AG04450 (cell line): ENCODE measurements at regions of chrX and their contacts with region 1.

Region 1: DNA sequence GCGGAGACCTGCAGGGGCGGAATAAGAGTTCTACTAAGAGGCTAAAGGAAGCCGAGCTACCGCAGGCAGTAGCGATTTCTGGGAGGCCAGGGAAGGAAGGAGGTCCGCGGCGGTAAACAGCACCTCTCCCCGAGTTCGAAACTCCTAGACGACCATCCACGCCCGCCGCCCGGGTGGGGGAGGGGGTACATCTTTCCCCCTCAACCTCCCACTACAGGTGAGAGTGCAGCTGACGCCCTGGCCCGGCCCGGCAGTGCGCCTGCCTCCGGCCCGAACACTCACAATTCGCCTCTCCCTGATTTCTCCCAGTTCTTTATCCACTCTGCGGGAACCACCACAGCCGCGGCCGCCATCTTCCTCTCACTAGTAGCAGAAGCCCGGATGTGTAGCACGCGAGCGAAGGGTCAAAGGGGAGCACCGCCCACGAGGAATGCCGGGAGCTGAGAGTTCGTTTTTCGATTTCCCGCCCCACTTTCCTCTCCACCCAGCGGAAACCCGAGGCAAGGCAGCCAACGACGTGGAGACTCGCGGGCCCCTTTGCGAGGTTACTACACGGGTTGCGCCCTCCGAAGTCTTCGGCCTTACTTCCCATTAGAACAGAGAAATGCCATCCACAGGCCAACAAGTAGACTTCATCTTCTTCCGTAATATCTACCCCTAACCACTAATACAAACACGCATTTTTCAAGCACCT is at the start of gene THOC2:
- DNase-seq: peak; percentile 61
- H3K4me3 ChIP-seq: peak within 1 kb of the TSS; percentile 76
- H3K27ac ChIP-seq: peak within 1 kb of the TSS; percentile 68
- H3K27me3 ChIP-seq: no peaks in the 10 kb centered on the region
- CTCF ChIP-seq: peak; percentile 46
- polyA plus RNA-seq, gene THOC2: 55.4 and 91.2 TPM in 2 replicates

Region 2: GRCh38 chrX:123603491-123603890 is 129.3 kb before region 1 on chrX:
- CTCF ChIA-PET with region 1: no interaction called
- POLR2A ChIA-PET with region 1: no interaction called
- DNase-seq: no peak
- H3K4me3 ChIP-seq: no peak overlapping the region
- H3K27ac ChIP-seq: no peak overlapping the region
- H3K27me3 ChIP-seq: no peaks in the 10 kb centered on the region
- CTCF ChIP-seq: no peak

Region 3: DNA sequence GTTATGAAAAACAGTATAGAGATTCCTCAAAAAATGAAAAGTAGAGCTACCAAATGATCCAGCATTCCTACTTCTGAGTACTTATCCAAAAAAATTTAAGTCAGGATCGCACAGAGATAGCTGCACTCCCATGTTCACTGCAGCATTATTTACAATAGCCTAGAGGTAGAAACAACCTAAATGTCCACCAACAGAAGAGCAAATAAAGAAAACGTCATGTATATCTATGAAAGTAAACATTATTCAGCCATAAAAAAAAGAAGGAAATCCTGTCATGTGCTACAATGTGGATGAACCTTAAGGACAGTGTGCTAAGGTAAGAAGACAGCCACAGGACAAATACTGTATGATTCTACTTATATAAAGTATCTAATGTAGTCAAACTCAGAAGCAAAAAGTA is 12.3 kb before region 1 on chrX:
- CTCF ChIA-PET with region 1: interaction called, 11 read pairs
- POLR2A ChIA-PET with region 1: interaction called, 3 read pairs
- DNase-seq: no peak
- H3K4me3 ChIP-seq: no peak overlapping the region
- H3K27ac ChIP-seq: no peak overlapping the region
- H3K27me3 ChIP-seq: no peaks in the 10 kb centered on the region
- CTCF ChIP-seq: no peak

Region 4: GRCh38 chrX:123764967-123765871 is 32.4 kb after region 1 on chrX:
- CTCF ChIA-PET with region 1: interaction called, 11 read pairs
- POLR2A ChIA-PET with region 1: no interaction called
- DNase-seq: peak; percentile 55
- H3K4me3 ChIP-seq: peak overlapping the region; percentile 52
- H3K27ac ChIP-seq: no peak overlapping the region
- H3K27me3 ChIP-seq: no peaks in the 10 kb centered on the region
- CTCF ChIP-seq: no peak

Region 5: DNA sequence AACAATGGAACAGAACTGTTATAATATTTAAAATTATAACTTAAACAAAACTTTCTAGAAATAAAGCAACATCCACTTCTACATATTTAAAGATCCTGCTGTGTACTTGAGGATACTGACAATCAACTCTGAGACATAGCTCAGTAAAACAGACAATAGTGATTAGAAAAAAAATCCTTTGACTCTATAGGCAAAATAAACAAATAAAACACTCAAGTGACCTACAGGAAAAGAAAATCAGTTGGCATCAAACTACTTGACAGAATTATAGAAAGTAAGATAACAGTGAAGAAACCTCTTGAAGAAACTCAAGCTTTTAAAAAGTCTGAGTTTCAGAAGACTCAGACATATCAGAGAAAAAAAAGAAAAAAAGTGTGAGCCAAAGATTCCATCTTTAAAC is 55.9 kb after region 1 on chrX:
- CTCF ChIA-PET with region 1: no interaction called
- POLR2A ChIA-PET with region 1: no interaction called
- DNase-seq: no peak
- H3K4me3 ChIP-seq: no peak overlapping the region
- H3K27ac ChIP-seq: no peak overlapping the region
- H3K27me3 ChIP-seq: no peaks in the 10 kb centered on the region
- CTCF ChIP-seq: no peak